ENCODE measurements at regions of chr17 and their contacts with region 1.

Region 1: GRCh38 chr17:81394921-81395599 is at the start of gene BAHCC1:
- DNase-seq: peak; percentile 100
- ATAC-seq: peak; percentile 91
- H3K4me3 ChIP-seq: peak within 1 kb of the TSS; percentile 66 to 76
- H3K27ac ChIP-seq: peak within 1 kb of the TSS; percentile 66 to 87
- H3K4me1 ChIP-seq: no peaks in the 10 kb centered on the region
- H3K27me3 ChIP-seq: no peaks in the 10 kb centered on the region
- total RNA-seq, gene BAHCC1: 22.8 to 49.3 TPM

Region 2: GRCh38 chr17:80694992-80695912 is 699.8 kb before region 1 on chr17:
- intact Hi-C with region 1: no loop called
- DNase-seq: no peak
- ATAC-seq: no peak
- H3K4me3 ChIP-seq: no peak overlapping the region
- H3K27ac ChIP-seq: no peak overlapping the region
- H3K4me1 ChIP-seq: no peaks in the 10 kb centered on the region
- H3K27me3 ChIP-seq: no peaks in the 10 kb centered on the region

Region 3: DNA sequence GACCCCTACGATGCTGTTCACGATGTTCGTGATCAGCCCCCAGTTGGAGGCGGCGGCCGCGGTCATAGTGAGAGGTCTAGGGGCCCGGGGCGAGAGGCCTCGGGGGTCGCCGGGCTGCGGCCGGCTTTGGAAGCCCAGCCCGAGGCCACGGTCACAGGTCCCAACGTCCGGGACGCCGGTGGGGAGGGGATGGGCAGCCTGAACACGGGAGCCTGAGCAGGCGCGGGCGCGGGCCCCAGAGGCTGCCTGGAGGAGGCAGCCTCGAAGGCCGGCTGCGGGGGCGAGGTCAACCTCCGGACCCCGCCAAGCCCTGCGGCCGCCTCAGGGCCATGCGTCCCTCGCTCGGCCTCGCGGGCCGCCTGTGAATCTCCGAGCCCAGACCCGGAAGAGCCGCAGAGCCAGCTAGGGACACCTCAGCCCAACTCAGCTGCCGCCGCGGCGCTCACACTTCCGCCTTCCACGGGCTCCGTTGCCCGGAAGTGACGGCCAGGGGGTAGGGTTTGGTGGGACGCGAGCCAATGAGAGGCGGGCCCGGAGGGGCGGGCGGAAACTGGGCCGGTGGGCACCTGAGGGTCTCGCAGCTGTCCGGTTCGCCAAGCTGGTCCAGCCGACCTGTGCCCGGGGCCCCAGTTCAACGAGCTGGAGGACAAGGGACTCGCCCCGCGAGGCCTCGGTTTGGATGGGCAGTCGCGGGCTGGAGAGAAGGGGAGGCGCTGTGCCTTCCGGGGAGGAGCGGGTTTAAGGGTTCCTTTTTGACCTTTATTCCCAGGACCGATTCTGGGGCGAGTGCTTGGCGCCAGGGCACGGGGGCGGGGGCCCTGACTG is 100.0 kb before region 1 on chr17 and contains the start of gene SLC38A10:
- intact Hi-C with region 1: loop called (anchors 5 kb)
- DNase-seq: peak; percentile 95 to 98
- ATAC-seq: peak; percentile 95
- H3K4me3 ChIP-seq: peak within 1 kb of the TSS; percentile 38 to 71
- H3K27ac ChIP-seq: peak within 1 kb of the TSS; percentile 1 to 59
- H3K4me1 ChIP-seq: no peaks in the 10 kb centered on the region
- H3K27me3 ChIP-seq: no peaks in the 10 kb centered on the region
- total RNA-seq, gene SLC38A10: 61.9 to 79.6 TPM

Region 4: GRCh38 chr17:81346090-81346907 is 48.8 kb before region 1 on chr17:
- intact Hi-C with region 1: loop called in 1 of 2 experiments (anchors 2 kb)
- DNase-seq: peak; percentile 99
- ATAC-seq: peak; percentile 90
- H3K4me3 ChIP-seq: peak overlapping the region in 1 of 2 donors; percentile 91
- H3K27ac ChIP-seq: peak overlapping the region in 1 of 2 donors; percentile 47
- H3K4me1 ChIP-seq: no peaks in the 10 kb centered on the region
- H3K27me3 ChIP-seq: no peaks in the 10 kb centered on the region

Region 5: DNA sequence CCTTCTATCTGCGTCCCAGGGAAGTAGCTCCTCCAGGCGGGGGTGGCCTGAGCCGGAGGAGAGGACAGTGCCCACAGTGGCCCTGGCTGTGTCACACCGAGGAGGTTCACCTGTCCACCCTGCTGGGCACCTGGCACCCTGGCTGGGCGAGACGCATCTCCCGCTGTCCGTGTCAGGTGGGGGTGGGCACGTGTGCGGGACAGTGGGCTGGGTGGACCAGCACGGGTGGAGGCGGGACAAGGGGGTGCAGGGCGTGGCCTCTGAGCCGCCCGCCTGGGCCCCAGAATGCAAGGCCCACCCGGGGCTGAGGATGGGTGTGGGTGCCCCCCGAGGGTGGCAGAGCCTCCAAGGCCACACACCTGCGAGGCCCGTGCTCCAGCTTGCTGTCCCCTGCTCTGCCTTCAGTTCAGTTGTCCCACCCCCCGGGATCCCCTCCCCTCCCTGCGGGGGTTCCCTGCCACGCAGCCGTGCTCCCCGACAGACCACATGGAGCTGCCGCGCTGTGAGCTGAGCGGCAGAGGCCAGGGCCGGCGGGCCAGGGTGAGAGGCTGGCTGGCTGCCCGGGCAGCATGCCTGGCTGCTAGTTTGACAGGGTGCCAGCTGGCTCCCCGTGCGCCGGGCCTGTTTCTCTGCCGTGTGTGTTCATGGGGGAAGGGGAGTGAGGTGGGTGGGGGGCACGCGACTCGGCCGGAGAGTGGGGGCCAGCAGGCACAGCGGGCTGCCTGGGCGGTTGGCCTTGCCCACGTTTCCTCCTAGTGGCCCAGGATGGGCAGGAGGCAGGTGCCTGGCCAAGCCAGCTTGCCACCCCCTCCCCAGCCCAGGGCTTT is 34.1 kb after region 1 on chr17:
- intact Hi-C with region 1: loop called in 1 of 2 experiments (anchors 2 kb)
- DNase-seq: peak; percentile 82 to 94
- ATAC-seq: peak; percentile 81
- H3K4me3 ChIP-seq: no peak overlapping the region
- H3K27ac ChIP-seq: no peak overlapping the region
- H3K4me1 ChIP-seq: no peaks in the 10 kb centered on the region
- H3K27me3 ChIP-seq: no peaks in the 10 kb centered on the region

Region 6: GRCh38 chr17:81484195-81484979 is 89.3 kb after region 1 on chr17:
- intact Hi-C with region 1: loop called (anchors 2 to 5 kb)
- DNase-seq: peak; percentile 93 to 96
- ATAC-seq: peak; percentile 89
- H3K4me3 ChIP-seq: no peak overlapping the region
- H3K27ac ChIP-seq: no peak overlapping the region
- H3K4me1 ChIP-seq: no peaks in the 10 kb centered on the region
- H3K27me3 ChIP-seq: peaks cover 0 to 2% of the 10 kb centered on the region in 2 donors

Region 7: DNA sequence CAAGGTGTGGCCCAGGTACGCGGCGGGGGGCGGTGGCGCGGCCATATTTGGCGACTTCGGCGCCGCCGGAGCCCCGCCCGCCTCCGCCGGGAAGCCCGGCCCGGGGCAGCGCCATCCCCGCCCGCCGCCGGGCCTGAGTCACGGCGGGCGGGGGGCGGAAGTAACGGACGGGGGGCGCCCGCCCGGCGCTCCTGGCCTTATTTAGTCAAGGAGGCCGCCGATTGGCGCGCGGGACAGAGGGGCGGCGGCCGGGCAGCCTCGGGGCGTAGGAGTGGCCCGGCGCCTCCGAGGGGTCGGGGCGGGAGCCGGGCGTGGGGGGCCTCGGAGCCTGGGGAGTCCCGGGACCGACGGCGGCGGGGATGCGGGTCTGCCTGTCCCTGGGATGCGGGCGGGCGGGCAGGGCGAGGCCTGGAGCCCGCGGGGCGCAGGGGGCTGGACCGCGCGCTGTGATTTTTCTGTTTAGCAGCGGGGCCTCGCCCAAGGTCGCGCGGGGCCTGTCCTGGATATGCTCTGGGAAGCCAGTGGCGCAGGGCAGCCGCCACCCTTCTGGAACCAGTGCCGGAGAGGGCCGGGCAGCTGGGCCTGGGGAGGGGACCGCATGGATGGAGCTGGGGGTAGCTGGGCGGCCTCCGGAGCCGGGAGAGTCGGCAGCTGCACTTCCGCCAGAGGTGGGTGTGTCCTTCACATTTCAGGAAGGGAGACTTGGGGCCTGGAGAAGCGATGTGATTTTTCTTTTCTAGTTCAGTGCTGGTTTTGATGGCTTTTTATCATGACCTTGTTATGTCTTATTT is 119.9 kb after region 1 on chr17:
- intact Hi-C with region 1: loop called (anchors 1 to 2 kb)
- DNase-seq: peak; percentile 90 to 94
- ATAC-seq: peak; percentile 70
- H3K4me3 ChIP-seq: peak overlapping the region; percentile 72 to 93
- H3K27ac ChIP-seq: peak overlapping the region; percentile 85 to 100
- H3K4me1 ChIP-seq: peaks cover 0 to 1% of the 10 kb centered on the region in 2 donors
- H3K27me3 ChIP-seq: peaks cover 0 to 2% of the 10 kb centered on the region in 2 donors

Region 8: GRCh38 chr17:81601525-81602120 is 206.6 kb after region 1 on chr17:
- intact Hi-C with region 1: loop called in 1 of 2 experiments (anchors 10 kb)
- DNase-seq: peak in 1 of 2 donors; percentile 41
- ATAC-seq: peak; percentile 82
- H3K4me3 ChIP-seq: no peak overlapping the region
- H3K27ac ChIP-seq: no peak overlapping the region
- H3K4me1 ChIP-seq: no peaks in the 10 kb centered on the region
- H3K27me3 ChIP-seq: no peaks in the 10 kb centered on the region

Measured in aorta (tissue), 5 donors.